Calu3 (cell line): ENCODE measurements at regions of chr3 and their contacts with region 1.

Region 1: GRCh38 chr3:90055666-90056065 is 948.2 kb downstream of the EPHA3 start:
- DNase-seq: no peak
- H3K4me3 Mint-ChIP-seq: no peak overlapping the region
- H3K27ac Mint-ChIP-seq: no peak overlapping the region
- H3K4me1 Mint-ChIP-seq: no peaks in the 10 kb centered on the region
- H3K27me3 Mint-ChIP-seq: no peaks in the 10 kb centered on the region
- CTCF ChIP-seq: no peak

Region 2: GRCh38 chr3:89179355-89180001 is 876.2 kb before region 1 on chr3:
- CTCF ChIA-PET with region 1: interaction called, 10 read pairs
- intact Hi-C with region 1: no loop called
- DNase-seq: no peak
- H3K4me3 Mint-ChIP-seq: no peak overlapping the region
- H3K27ac Mint-ChIP-seq: no peak overlapping the region
- H3K4me1 Mint-ChIP-seq: no peaks in the 10 kb centered on the region
- H3K27me3 Mint-ChIP-seq: no peaks in the 10 kb centered on the region
- CTCF ChIP-seq: no peak